ENCODE measurements at regions of chr6 and their contacts with region 1.

Region 1: DNA sequence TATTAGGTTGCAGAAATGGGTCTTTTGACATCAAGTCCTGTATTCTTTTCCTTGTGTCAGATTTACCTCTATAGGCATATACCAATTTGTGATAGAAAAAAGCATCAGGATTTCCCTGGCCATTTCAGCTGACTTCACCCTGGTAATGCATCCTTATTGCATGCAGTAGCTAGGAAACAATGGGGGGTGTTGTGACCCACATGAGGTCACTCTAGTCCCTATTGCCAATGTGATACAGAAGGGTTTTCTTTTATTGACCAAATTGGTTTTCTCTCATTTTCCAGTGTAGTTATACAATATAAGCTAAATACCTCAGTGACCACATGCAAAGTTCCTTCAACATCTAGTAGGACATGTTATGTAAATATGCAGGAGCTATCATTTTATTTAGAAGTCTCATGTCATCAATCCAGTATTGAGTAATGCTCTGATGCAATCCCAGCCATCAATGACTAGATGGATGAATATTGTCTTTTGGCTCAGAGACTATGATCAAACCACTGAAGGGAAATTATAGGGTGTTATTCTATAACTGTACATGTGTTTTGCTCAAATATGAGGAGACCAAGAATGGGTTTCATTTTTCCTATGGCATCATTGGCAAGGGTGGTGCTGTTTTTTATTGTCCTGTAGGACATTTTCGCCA is 177.7 kb downstream of the KLHL32 start:
- DNase-seq: no peak
- H3K4me3 ChIP-seq: no peak overlapping the region
- H3K27ac ChIP-seq: no peak overlapping the region
- H3K4me1 ChIP-seq: no peaks in the 10 kb centered on the region
- CTCF ChIP-seq: no peak

Region 2: GRCh38 chr6:96787846-96788580 is 314.3 kb before region 1 on chr6:
- CTCF ChIA-PET with region 1: no interaction called
- POLR2A ChIA-PET with region 1: no interaction called
- intact Hi-C with region 1: no loop called
- DNase-seq: no peak
- H3K4me3 ChIP-seq: no peak overlapping the region
- H3K27ac ChIP-seq: no peak overlapping the region
- H3K4me1 ChIP-seq: no peaks in the 10 kb centered on the region
- CTCF ChIP-seq: no peak

Region 3: GRCh38 chr6:97246842-97247241 is 144.6 kb after region 1 on chr6:
- CTCF ChIA-PET with region 1: no interaction called
- POLR2A ChIA-PET with region 1: interaction called, 11 read pairs
- intact Hi-C with region 1: no loop called
- DNase-seq: no peak
- H3K4me3 ChIP-seq: no peak overlapping the region
- H3K27ac ChIP-seq: no peak overlapping the region
- H3K4me1 ChIP-seq: no peaks in the 10 kb centered on the region
- CTCF ChIP-seq: no peak

Region 4: GRCh38 chr6:97450087-97450486 is 347.8 kb after region 1 on chr6:
- CTCF ChIA-PET with region 1: no interaction called
- POLR2A ChIA-PET with region 1: no interaction called
- intact Hi-C with region 1: no loop called
- DNase-seq: no peak
- H3K4me3 ChIP-seq: no peak overlapping the region
- H3K27ac ChIP-seq: no peak overlapping the region
- H3K4me1 ChIP-seq: no peaks in the 10 kb centered on the region
- CTCF ChIP-seq: no peak